Activated CD4-positive, alpha-beta T cell treated with anti-CD3 and anti-CD28 coated beads, Interleukin-2, amount 10 ng/mL, durations not matched to agents 24 days and 14 days (primary cell): ENCODE measurements at regions of chr19 and their contacts with region 1.

Region 1: GRCh38 chr19:680287-681028 is 4.3 kb downstream of the FSTL3 start:
- DNase-seq: peak; percentile 99
- H3K4me3 Mint-ChIP-seq: peak overlapping the region; percentile 88
- H3K27ac Mint-ChIP-seq: peak overlapping the region; percentile 99
- H3K4me1 Mint-ChIP-seq: peaks cover 4% of the 10 kb centered on the region
- H3K27me3 Mint-ChIP-seq: peaks cover 3% of the 10 kb centered on the region

Region 2: DNA sequence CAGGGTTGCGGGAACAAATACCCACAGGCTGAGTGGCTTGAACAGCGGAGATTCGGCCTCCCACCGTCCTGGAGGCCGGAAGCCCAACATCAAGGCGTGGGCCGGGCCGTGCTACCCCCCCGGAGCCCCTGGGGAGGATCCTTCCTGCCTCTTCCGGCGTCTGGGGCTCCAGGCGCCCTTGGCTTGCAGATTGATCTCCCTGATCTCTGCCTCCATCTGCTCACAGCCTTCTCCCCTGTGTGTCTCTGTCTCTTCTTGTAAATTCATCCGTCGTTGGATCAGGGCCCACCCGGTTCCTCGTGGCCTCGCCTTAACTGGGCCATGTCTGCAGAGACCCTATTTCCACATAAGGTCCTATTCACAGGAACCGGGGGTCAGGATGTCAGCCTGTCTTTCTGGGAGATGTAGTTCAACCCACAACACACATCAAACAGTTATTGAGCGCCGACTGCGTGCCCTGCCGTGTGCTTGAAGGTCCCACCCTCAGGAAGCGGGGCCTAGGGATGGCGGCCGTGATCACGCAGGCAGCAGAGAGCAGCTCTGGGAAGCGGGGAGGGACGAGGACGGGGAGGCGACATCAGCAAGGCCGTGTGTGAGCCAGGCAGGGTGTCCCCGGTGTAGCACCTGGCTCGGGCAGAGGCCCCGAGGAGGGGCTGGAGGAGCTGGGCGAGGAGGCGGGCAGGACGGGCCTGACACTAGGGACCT is 69.5 kb before region 1 on chr19:
- intact Hi-C with region 1: loop called (anchors 2 kb)
- DNase-seq: peak; percentile 89
- H3K4me3 Mint-ChIP-seq: peak overlapping the region; percentile 86
- H3K27ac Mint-ChIP-seq: peak overlapping the region; percentile 95
- H3K4me1 Mint-ChIP-seq: peaks cover 12% of the 10 kb centered on the region
- H3K27me3 Mint-ChIP-seq: peaks cover 2% of the 10 kb centered on the region

Region 3: DNA sequence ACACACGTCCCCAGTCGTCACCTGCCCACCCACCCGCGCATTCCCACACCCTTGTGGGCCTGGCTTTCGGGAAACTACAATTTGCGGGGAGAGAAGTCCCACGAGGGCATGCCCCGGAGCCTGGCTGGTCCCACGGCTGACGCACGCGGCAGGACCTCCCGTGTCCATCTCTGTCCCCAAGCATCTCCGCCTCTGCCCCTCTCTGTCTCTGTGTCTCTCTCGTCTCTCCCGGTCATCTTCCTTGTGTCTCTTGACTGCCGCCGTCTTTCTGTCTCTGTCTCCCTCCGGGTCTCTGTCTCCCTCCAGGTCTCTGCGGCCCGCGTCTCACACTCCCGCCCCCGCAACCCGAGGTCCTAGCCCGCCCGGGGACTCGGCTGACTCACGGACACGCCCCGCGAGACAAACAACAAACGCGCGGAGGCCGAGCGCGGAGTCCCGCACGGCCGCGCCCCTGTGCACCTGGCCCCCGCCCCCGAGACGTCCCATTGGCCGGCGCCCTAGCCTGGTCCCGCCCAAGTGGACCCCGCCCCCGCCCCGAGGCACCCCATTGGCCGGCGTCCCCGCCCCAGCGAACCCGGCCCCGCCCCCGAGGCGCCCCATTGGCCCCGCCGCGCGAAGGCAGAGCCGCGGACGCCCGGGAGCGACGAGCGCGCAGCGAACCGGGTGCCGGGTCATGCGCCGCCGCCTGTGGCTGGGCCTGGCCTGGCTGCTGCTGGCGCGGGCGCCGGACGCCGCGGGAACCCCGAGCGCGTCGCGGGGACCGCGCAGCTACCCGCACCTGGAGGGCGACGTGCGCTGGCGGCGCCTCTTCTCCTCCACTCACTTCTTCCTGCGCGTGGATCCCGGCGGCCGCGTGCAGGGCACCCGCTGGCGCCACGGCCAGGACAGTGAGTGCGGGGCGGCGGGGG is 41.0 kb before region 1 on chr19 and contains the start of gene FGF22:
- intact Hi-C with region 1: loop called (anchors 1 kb)
- DNase-seq: peak; percentile 97
- H3K4me3 Mint-ChIP-seq: peak within 1 kb of the TSS; percentile 90
- H3K27ac Mint-ChIP-seq: peak within 1 kb of the TSS; percentile 82
- H3K4me1 Mint-ChIP-seq: peaks cover 6% of the 10 kb centered on the region
- H3K27me3 Mint-ChIP-seq: peaks cover 3% of the 10 kb centered on the region
- total RNA-seq, gene FGF22: not detected in 2 replicates

Region 4: GRCh38 chr19:703651-704446 is 23.4 kb after region 1 on chr19:
- intact Hi-C with region 1: loop called (anchors 1 kb)
- DNase-seq: peak; percentile 88
- H3K4me3 Mint-ChIP-seq: peak overlapping the region; percentile 52
- H3K27ac Mint-ChIP-seq: no peak overlapping the region
- H3K4me1 Mint-ChIP-seq: peaks cover 6% of the 10 kb centered on the region
- H3K27me3 Mint-ChIP-seq: peaks cover 21% of the 10 kb centered on the region

Region 5: GRCh38 chr19:752652-753517 is 72.4 kb after region 1 on chr19:
- intact Hi-C with region 1: no loop called
- DNase-seq: no peak
- H3K4me3 Mint-ChIP-seq: no peak overlapping the region
- H3K27ac Mint-ChIP-seq: no peak overlapping the region
- H3K4me1 Mint-ChIP-seq: no peaks in the 10 kb centered on the region
- H3K27me3 Mint-ChIP-seq: no peaks in the 10 kb centered on the region

Region 6: GRCh38 chr19:913080-913748 is 232.8 kb after region 1 on chr19 and contains the start of gene R3HDM4:
- intact Hi-C with region 1: no loop called
- DNase-seq: peak; percentile 97
- H3K4me3 Mint-ChIP-seq: peak within 1 kb of the TSS; percentile 85
- H3K27ac Mint-ChIP-seq: peak within 1 kb of the TSS; percentile 89
- H3K4me1 Mint-ChIP-seq: peaks cover 26% of the 10 kb centered on the region
- H3K27me3 Mint-ChIP-seq: peaks cover 2% of the 10 kb centered on the region
- total RNA-seq, gene R3HDM4: 86.8 and 91.5 TPM in 2 replicates